CD14-positive monocyte (primary cell): ENCODE measurements at regions of chr19 and their contacts with region 1.

Region 1: GRCh38 chr19:48110350-48110966 is at the start of gene PLA2G4C:
- DNase-seq: peak; percentile 77 to 90 (median 80)
- H3K4me3 ChIP-seq: peak within 1 kb of the TSS; percentile 40 to 74 (median 66)
- H3K4me3 Mint-ChIP-seq: peak within 1 kb of the TSS; percentile 76 to 89
- H3K27ac ChIP-seq: peak within 1 kb of the TSS; percentile 88 to 93
- H3K27ac Mint-ChIP-seq: peak within 1 kb of the TSS; percentile 79 to 95 (median 93)
- H3K4me1 ChIP-seq: peaks cover 16 to 18% of the 10 kb centered on the region in 2 donors
- H3K4me1 Mint-ChIP-seq: peaks cover 16% of the 10 kb centered on the region
- H3K27me3 ChIP-seq: no peaks in the 10 kb centered on the region
- H3K27me3 Mint-ChIP-seq: peaks cover 7 to 16% (median 9%) of the 10 kb centered on the region in 3 donors
- CTCF ChIP-seq: no peak
- polyA plus RNA-seq, gene PLA2G4C: 3.8 to 14.5 (median 8.5) TPM

Region 2: GRCh38 chr19:48152551-48152950 is 42.1 kb after region 1 on chr19:
- intact Hi-C with region 1: loop called (anchors 1 to 5 kb)
- DNase-seq: peak; percentile 28 to 55 (median 49)
- H3K4me3 ChIP-seq: no peak overlapping the region
- H3K4me3 Mint-ChIP-seq: no peak overlapping the region
- H3K27ac ChIP-seq: no peak overlapping the region
- H3K27ac Mint-ChIP-seq: peak overlapping the region in 3 of 7 donors; percentile 37 to 58 (median 41)
- H3K4me1 ChIP-seq: no peaks in the 10 kb centered on the region
- H3K4me1 Mint-ChIP-seq: no peaks in the 10 kb centered on the region
- H3K27me3 ChIP-seq: no peaks in the 10 kb centered on the region
- H3K27me3 Mint-ChIP-seq: peaks cover 0 to 1% (median 1%) of the 10 kb centered on the region in 3 donors
- CTCF ChIP-seq: peak; percentile 79